Naive thymus-derived CD4-positive, alpha-beta T cell (primary cell): ENCODE measurements at regions of chr5 and their contacts with region 1.

Region 1: DNA sequence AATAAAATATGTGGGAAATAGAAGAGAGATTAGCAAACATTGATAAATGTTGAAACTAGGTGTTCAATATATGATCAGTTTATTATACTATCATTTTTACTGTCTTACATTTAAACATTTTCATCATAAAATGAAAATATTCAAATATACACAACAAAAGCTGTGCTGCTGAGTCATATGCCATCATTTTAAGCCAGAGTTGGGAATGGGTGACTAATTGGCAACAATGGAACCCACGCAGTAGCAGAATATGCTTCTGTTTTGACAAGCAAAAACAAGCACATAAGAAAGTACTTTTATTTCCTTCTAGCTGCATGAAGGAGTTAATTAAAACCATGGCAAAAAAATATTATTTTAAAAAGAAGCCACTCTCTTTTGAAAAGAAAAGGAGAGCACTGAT is 340.0 kb upstream of the EDIL3 start:
- DNase-seq: no peak
- ATAC-seq: no peak
- H3K4me3 ChIP-seq: no peak overlapping the region
- H3K4me3 Mint-ChIP-seq: no peak overlapping the region
- H3K27ac ChIP-seq: no peak overlapping the region
- H3K27ac Mint-ChIP-seq: no peak overlapping the region
- H3K4me1 ChIP-seq: no peaks in the 10 kb centered on the region
- H3K4me1 Mint-ChIP-seq: no peaks in the 10 kb centered on the region
- H3K27me3 ChIP-seq: no peaks in the 10 kb centered on the region
- H3K27me3 Mint-ChIP-seq: no peaks in the 10 kb centered on the region

Region 2: DNA sequence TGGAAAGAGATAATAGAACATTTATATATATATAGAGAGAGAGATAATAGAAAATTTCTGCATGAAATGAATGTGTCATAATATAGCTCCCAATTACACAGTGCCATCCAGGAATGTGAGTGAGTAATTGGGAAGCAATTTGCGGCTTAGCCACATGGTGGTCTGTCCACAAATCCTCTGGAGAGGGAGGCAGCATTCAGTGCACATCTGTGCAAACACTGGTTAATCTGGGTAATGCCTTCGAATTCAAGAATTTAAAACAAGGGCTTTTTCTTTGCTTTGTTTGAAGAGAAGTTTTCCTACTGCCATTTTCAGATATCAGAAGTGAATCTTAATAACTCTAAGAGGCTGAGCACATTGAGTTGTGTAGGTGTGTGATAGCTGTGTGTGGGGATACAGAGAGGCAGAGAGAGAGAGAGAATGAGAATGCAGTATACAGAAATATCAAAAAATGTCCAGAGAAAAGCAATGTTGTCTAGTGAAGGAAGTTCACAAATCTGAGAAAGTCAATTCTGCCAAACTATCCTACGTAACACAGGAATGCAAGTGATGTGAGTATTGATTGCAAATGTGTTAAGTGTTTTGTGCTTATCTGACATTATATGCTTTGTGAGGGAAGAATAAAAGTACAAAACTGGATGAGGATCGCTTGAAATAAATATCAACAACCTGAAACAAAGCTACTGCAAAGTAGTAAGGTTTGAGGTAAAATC is 474.6 kb before region 1 on chr5:
- CTCF ChIA-PET with region 1: no interaction called
- POLR2A ChIA-PET with region 1: no interaction called
- intact Hi-C with region 1: no loop called
- DNase-seq: no peak
- ATAC-seq: no peak
- H3K4me3 ChIP-seq: no peak overlapping the region
- H3K4me3 Mint-ChIP-seq: no peak overlapping the region
- H3K27ac ChIP-seq: no peak overlapping the region
- H3K27ac Mint-ChIP-seq: no peak overlapping the region
- H3K4me1 ChIP-seq: no peaks in the 10 kb centered on the region
- H3K4me1 Mint-ChIP-seq: no peaks in the 10 kb centered on the region
- H3K27me3 ChIP-seq: no peaks in the 10 kb centered on the region
- H3K27me3 Mint-ChIP-seq: no peaks in the 10 kb centered on the region

Region 3: DNA sequence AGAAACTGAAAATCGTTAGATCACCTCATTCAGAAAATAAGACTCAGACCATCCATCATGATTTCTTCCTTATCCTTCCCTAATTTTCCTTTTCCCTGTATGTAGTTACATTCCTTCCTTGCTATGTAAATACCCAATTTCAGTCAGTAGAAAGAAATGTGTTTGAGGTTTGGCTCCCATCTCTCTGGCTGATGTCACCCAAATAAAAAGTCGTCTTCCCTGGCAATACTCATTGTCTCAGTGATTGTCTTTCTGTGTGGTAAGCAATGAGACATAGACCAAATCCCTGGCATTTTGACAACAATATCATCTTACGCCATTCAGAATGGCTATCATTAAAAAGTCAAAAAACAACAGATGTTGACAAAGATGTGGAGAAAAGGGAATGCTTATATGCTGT is 36.1 kb before region 1 on chr5:
- CTCF ChIA-PET with region 1: no interaction called
- POLR2A ChIA-PET with region 1: no interaction called
- intact Hi-C with region 1: loop called in 1 of 2 experiments (anchors 1 kb)
- DNase-seq: no peak
- ATAC-seq: no peak
- H3K4me3 ChIP-seq: no peak overlapping the region
- H3K4me3 Mint-ChIP-seq: no peak overlapping the region
- H3K27ac ChIP-seq: no peak overlapping the region
- H3K27ac Mint-ChIP-seq: peak overlapping the region in 1 of 9 donors; percentile 7
- H3K4me1 ChIP-seq: no peaks in the 10 kb centered on the region
- H3K4me1 Mint-ChIP-seq: no peaks in the 10 kb centered on the region
- H3K27me3 ChIP-seq: no peaks in the 10 kb centered on the region
- H3K27me3 Mint-ChIP-seq: no peaks in the 10 kb centered on the region

Region 4: DNA sequence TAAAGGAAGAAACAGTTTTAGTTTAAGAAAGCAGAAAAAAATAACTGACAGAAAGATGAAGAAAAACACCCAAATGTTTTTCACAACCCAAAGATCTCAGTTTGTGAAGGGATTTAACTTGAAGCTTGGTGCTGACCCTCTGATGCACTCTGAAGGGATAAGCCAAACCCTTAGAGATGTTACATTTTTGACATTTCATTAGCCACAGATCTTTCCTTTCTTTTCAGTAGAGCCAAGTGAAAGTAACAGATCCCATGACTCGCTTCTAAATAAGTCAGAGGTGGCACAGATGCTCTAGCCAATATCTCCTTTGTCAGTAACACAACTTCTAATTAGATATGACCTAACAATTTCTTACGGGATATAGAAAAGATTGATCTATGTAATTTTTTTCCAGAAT is 54.5 kb after region 1 on chr5:
- CTCF ChIA-PET with region 1: no interaction called
- POLR2A ChIA-PET with region 1: no interaction called
- intact Hi-C with region 1: no loop called
- DNase-seq: no peak
- ATAC-seq: no peak
- H3K4me3 ChIP-seq: no peak overlapping the region
- H3K4me3 Mint-ChIP-seq: no peak overlapping the region
- H3K27ac ChIP-seq: no peak overlapping the region
- H3K27ac Mint-ChIP-seq: no peak overlapping the region
- H3K4me1 ChIP-seq: no peaks in the 10 kb centered on the region
- H3K4me1 Mint-ChIP-seq: no peaks in the 10 kb centered on the region
- H3K27me3 ChIP-seq: no peaks in the 10 kb centered on the region
- H3K27me3 Mint-ChIP-seq: peaks cover 0 to 3% (median 0%) of the 10 kb centered on the region in 5 donors